ENCODE measurements at regions of chr7 and their contacts with region 1.

Region 1: DNA sequence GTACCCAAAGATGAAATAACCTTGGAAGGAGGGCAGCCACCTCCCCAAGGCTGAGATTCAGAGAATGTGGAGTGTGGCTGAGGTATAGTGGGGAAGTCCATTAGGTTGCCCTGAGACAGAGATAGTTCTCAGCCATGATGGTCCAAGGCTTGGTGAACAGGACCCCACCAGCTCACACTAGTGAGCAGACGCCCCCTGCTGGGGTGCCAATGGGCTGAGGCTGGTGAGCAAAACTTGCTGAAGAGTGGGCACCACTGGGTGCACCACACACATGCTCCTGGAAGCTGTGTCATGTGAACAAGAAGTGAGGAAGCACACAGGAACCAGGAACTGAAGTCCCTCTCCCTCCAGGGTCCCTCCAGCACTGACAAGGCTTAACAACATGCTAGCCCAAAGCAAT is 8.9 kb downstream of the FBXL13 start:
- DNase-seq: peak; percentile 65
- H3K4me3 ChIP-seq: no peak overlapping the region
- H3K27ac ChIP-seq: no peak overlapping the region
- H3K4me1 ChIP-seq: no peaks in the 10 kb centered on the region; a peak in 1 of 4 replicates
- H3K27me3 ChIP-seq: no peaks in the 10 kb centered on the region
- CTCF ChIP-seq: peak; percentile 60
- EP300 ChIP-seq: no peak
- RAD21 ChIP-seq: peak; percentile 70

Region 2: DNA sequence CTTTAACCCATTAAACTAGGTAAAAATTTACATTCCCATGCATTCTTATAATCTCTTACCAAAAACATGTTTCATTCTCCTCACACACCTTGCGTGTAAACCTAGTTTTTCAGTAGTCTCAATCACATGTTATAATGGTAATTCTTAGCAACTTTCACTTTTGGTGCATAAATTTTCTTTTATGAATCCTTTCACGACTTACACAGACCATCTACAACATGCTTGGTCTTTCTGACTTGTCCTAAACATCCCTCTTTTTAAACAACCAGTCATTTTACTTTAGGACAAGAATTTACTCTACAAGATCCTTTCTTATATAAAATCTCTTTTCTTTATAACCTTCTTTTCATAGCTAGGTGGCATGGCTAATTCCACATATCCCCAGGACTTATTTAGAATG is 16.8 kb before region 1 on chr7:
- CTCF ChIA-PET with region 1: interaction called, 19 read pairs
- POLR2A ChIA-PET with region 1: no interaction called
- DNase-seq: no peak
- H3K4me3 ChIP-seq: no peak overlapping the region
- H3K27ac ChIP-seq: no peak overlapping the region
- H3K4me1 ChIP-seq: no peaks in the 10 kb centered on the region
- H3K27me3 ChIP-seq: no peaks in the 10 kb centered on the region
- CTCF ChIP-seq: no peak
- EP300 ChIP-seq: no peak
- RAD21 ChIP-seq: no peak

Region 3: GRCh38 chr7:103149808-103150180 is 84.1 kb after region 1 on chr7:
- CTCF ChIA-PET with region 1: no interaction called
- POLR2A ChIA-PET with region 1: no interaction called
- DNase-seq: no peak
- H3K4me3 ChIP-seq: peak overlapping the region; percentile 72 to 96
- H3K27ac ChIP-seq: peak overlapping the region; percentile 91 to 99; a peak in 3 of 4 replicates
- H3K4me1 ChIP-seq: peaks cover 4 to 16% of the 10 kb centered on the region in 2 experiments; a peak in 2 of 4 replicates
- H3K27me3 ChIP-seq: no peaks in the 10 kb centered on the region
- CTCF ChIP-seq: no peak
- EP300 ChIP-seq: no peak
- RAD21 ChIP-seq: no peak